ENCODE measurements at regions of chr2 and their contacts with region 1.

Region 1: DNA sequence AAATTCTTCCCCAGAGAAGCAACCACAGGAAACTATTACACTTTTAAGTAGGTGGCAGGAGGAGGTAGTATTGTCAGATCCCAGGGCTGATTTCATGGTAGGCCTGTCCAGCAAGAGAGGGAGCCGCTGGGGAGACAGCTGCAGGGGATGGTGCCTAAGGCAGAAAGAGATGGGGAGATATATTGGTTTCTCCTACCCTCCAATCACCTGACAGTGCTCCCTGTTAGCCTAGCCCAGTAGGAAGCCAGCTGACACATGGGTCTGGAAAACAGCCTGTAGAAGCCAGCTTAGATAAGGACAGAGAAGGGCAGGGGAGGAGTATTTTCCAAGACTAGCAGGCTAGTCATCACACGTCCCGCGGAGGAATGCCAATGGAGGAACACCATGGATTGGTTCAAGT is 8.2 kb upstream of the SPOPL start:
- DNase-seq: no peak
- ATAC-seq: no peak
- H3K4me3 ChIP-seq: no peak overlapping the region
- H3K27ac ChIP-seq: peak overlapping the region; percentile 69
- H3K4me1 ChIP-seq: peaks cover 78% of the 10 kb centered on the region
- H3K27me3 ChIP-seq: no peaks in the 10 kb centered on the region
- CTCF ChIP-seq: no peak
- EP300 ChIP-seq: no peak
- POLR2A ChIP-seq: no peak
- RAD21 ChIP-seq: no peak

Region 2: DNA sequence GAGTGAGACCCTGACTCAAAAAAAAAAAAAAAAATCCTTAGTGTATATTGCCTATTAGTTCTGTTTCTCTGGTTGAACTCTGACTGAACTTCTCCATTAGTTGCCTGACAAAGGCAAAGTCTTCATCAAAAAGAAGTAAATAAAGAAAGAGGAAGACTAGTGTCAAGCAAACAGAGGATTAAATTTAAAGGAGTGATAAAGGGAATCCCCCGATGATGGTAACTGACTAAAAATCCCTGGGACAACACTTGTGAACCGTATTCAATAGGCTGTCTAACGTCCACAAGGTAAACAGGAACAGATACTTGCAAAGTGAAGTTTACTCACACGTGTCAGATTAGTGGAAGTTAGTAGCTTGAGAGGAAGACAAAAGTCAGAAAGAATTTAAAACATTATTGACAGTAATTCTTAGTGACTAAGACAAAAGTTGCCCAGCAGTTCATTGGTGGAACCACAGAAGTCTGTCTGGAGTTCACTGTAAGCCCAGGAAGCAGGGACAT is 18.0 kb before region 1 on chr2:
- CTCF ChIA-PET with region 1: no interaction called
- POLR2A ChIA-PET with region 1: interaction called, 6 read pairs
- in situ Hi-C with region 1: no loop called
- intact Hi-C with region 1: loop called (anchors 1 kb)
- DNase-seq: peak; percentile 77
- ATAC-seq: peak; percentile 85
- H3K4me3 ChIP-seq: no peak overlapping the region
- H3K27ac ChIP-seq: peak overlapping the region; percentile 10
- H3K4me1 ChIP-seq: peaks cover 23% of the 10 kb centered on the region
- H3K27me3 ChIP-seq: no peaks in the 10 kb centered on the region
- CTCF ChIP-seq: no peak
- EP300 ChIP-seq: peak in 1 of 2 experiments; percentile 63; a peak in 1 of 4 replicates
- POLR2A ChIP-seq: no peak
- RAD21 ChIP-seq: no peak

Region 3: GRCh38 chr2:138712212-138712979 is 219.1 kb after region 1 on chr2:
- CTCF ChIA-PET with region 1: no interaction called
- POLR2A ChIA-PET with region 1: no interaction called
- in situ Hi-C with region 1: no loop called
- intact Hi-C with region 1: loop called (anchors 5 kb)
- DNase-seq: peak; percentile 37
- ATAC-seq: peak; percentile 76
- H3K4me3 ChIP-seq: peak overlapping the region in 2 of 3 experiments; percentile 21 to 43; a peak in 1 of 6 replicates
- H3K27ac ChIP-seq: no peak overlapping the region
- H3K4me1 ChIP-seq: peaks cover 46% of the 10 kb centered on the region
- H3K27me3 ChIP-seq: peaks cover 0 to 12% of the 10 kb centered on the region in 2 experiments; a peak in 2 of 5 replicates
- CTCF ChIP-seq: no peak
- EP300 ChIP-seq: peak in 1 of 2 experiments; percentile 53; a peak in 1 of 4 replicates
- POLR2A ChIP-seq: no peak
- RAD21 ChIP-seq: no peak

Region 4: GRCh38 chr2:138724327-138724726 is 231.0 kb after region 1 on chr2:
- CTCF ChIA-PET with region 1: no interaction called
- POLR2A ChIA-PET with region 1: no interaction called
- in situ Hi-C with region 1: no loop called
- intact Hi-C with region 1: loop called (anchors 5 kb)
- DNase-seq: peak; percentile 41
- ATAC-seq: peak; percentile 71
- H3K4me3 ChIP-seq: no peak overlapping the region; a peak in 1 of 6 replicates
- H3K27ac ChIP-seq: no peak overlapping the region
- H3K4me1 ChIP-seq: peaks cover 49% of the 10 kb centered on the region
- H3K27me3 ChIP-seq: peaks cover 2 to 15% of the 10 kb centered on the region in 2 experiments; a peak in 2 of 5 replicates
- CTCF ChIP-seq: no peak
- EP300 ChIP-seq: peak in 1 of 2 experiments; percentile 32; a peak in 1 of 4 replicates
- POLR2A ChIP-seq: no peak
- RAD21 ChIP-seq: no peak